PC-9 (cell line): ENCODE measurements at regions of chr19 and their contacts with region 1.

Region 1: GRCh38 chr19:48501496-48502350 is 9.9 kb downstream of the LMTK3 start:
- DNase-seq: peak; percentile 96 to 99
- H3K4me3 ChIP-seq: peak overlapping the region; percentile 95
- H3K27ac ChIP-seq: peak overlapping the region; percentile 65
- H3K4me1 ChIP-seq: peaks cover 16% of the 10 kb centered on the region; the same call in 1 of the 2 replicates
- H3K27me3 ChIP-seq: no peaks in the 10 kb centered on the region
- CTCF ChIP-seq: no peak

Region 2: GRCh38 chr19:48724796-48725753 is 223.4 kb after region 1 on chr19:
- CTCF ChIA-PET with region 1: no interaction called
- POLR2A ChIA-PET with region 1: interaction called, 11 read pairs
- intact Hi-C with region 1: no loop called
- DNase-seq: peak; percentile 37 to 51
- H3K4me3 ChIP-seq: no peak overlapping the region
- H3K27ac ChIP-seq: no peak overlapping the region
- H3K4me1 ChIP-seq: no peaks in the 10 kb centered on the region
- H3K27me3 ChIP-seq: no peaks in the 10 kb centered on the region
- CTCF ChIP-seq: no peak

Region 3: GRCh38 chr19:48842789-48843162 is 341.1 kb after region 1 on chr19:
- CTCF ChIA-PET with region 1: no interaction called
- POLR2A ChIA-PET with region 1: interaction called, 13 read pairs
- intact Hi-C with region 1: no loop called
- DNase-seq: peak; percentile 36 to 50
- H3K4me3 ChIP-seq: no peak overlapping the region
- H3K27ac ChIP-seq: no peak overlapping the region
- H3K4me1 ChIP-seq: no peaks in the 10 kb centered on the region
- H3K27me3 ChIP-seq: no peaks in the 10 kb centered on the region
- CTCF ChIP-seq: peak; percentile 95